Gastrocnemius medialis (tissue), 4 donors: ENCODE measurements at regions of chr19 and their contacts with region 1.

Region 1: GRCh38 chr19:10403137-10404021 is at the start of gene CDC37:
- DNase-seq: peak; percentile 91 to 96
- ATAC-seq: peak; percentile 84 to 88
- H3K4me3 ChIP-seq: peak within 1 kb of the TSS; percentile 73 to 100 (median 84)
- H3K27ac ChIP-seq: peak within 1 kb of the TSS; percentile 87 to 98 (median 90)
- H3K4me1 ChIP-seq: peaks cover 44 to 51% of the 10 kb centered on the region in 2 donors
- H3K27me3 ChIP-seq: peaks cover 13 to 23% (median 22%) of the 10 kb centered on the region in 3 donors
- CTCF ChIP-seq: no peak
- POLR2A ChIP-seq: peak; percentile 94 to 96
- total RNA-seq, gene CDC37: 133 to 189 (median 163) TPM

Region 2: DNA sequence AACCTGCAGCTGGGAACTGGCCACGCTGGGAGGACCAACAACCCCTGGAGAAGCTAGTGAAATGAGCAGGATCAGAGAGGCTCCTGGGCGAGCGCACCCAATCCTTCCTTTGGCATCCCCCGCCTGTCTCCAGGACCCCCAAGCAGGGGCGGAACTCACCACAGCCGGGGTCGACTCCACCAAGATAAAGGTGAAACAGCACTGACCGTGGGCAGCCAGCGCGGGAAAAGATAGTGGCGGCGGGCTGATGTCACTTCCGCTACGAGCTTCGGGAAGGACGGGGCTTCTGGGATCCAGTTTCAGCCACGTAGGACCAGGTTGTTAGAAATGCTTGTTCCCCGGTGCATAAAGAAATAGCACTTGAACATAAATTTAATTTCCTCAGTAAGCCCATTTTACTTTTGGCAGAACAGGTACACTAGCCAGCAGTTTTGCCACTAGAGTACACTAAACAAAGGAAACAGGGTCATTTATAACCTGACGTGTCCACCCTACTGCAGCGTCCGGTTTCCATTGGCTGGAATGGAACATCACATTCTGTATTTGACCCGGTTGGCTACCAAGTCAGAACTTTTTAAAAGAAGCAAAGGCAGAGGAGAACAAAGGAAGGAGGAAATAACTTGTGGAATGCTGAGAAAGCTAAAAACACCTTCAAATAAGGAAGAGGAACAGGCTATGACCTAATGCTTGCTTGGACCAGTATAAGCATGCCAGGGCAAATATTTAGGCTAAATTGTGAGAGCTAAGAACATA is 703.0 kb before region 1 on chr19:
- in situ Hi-C with region 1: no loop called
- intact Hi-C with region 1: no loop called
- DNase-seq: no peak
- ATAC-seq: no peak
- H3K4me3 ChIP-seq: no peak overlapping the region
- H3K27ac ChIP-seq: no peak overlapping the region
- H3K4me1 ChIP-seq: no peaks in the 10 kb centered on the region
- H3K27me3 ChIP-seq: no peaks in the 10 kb centered on the region
- CTCF ChIP-seq: no peak
- POLR2A ChIP-seq: no peak

Region 3: DNA sequence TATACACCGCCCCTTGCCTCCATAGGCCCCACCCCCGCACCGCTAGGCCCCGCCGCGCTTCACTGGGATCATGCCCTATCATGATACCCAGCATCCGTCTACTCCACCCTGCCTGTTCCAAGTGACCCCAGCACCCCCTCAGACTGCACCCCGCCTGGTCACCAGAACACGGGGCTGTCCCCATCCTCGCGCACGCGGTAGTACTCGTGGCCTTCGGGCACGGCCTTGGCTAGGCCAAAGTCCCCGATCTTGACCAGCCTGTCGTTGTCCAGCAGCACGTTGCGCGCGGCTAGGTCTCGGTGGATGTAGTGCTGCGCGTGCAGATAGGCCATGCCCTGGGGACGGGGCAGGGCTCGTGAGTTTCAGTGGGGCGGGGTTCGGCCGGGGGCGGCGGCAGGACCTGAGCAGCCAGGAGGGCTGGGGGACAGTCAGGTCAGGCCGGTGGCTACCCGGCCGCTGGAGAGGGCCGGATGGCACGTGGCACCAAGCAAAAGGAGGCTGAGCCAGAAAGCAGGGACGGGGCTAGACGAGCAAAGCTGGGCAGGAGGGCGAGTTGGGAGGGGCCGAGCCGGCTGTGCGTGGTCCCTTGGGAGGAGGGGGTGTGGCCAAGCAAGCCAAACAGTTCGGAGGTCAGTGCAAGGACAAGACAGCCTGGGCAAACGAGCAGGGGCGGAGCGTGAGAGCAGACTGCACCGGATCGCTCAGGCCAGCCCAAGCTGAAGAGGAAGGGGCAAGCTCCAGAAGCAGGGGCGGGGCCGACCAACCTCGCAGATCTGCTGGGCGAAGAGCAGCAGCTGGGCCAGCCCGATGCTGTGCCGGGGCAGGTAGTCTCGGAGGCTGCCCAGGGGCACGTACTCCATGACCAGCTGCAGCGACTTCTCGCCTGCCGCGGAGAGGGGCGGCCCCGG is 50.4 kb before region 1 on chr19:
- in situ Hi-C with region 1: no loop called
- intact Hi-C with region 1: no loop called
- DNase-seq: peak; percentile 27 to 50
- ATAC-seq: peak; percentile 54 to 71
- H3K4me3 ChIP-seq: peak overlapping the region in 2 of 4 donors; percentile 15 to 33
- H3K27ac ChIP-seq: peak overlapping the region in 3 of 4 donors; percentile 44 to 71 (median 67)
- H3K4me1 ChIP-seq: no peaks in the 10 kb centered on the region
- H3K27me3 ChIP-seq: no peaks in the 10 kb centered on the region
- CTCF ChIP-seq: no peak
- POLR2A ChIP-seq: no peak

Region 4: GRCh38 chr19:10379880-10380312 is 23.5 kb before region 1 on chr19:
- in situ Hi-C with region 1: no loop called
- intact Hi-C with region 1: no loop called
- DNase-seq: no peak
- ATAC-seq: no peak
- H3K4me3 ChIP-seq: peak overlapping the region; percentile 90 to 98 (median 95)
- H3K27ac ChIP-seq: peak overlapping the region; percentile 82 to 92 (median 82)
- H3K4me1 ChIP-seq: peaks cover 10 to 14% of the 10 kb centered on the region in 2 donors
- H3K27me3 ChIP-seq: no peaks in the 10 kb centered on the region
- CTCF ChIP-seq: no peak
- POLR2A ChIP-seq: no peak

Region 5: GRCh38 chr19:10416380-10417257 is 13.2 kb after region 1 on chr19:
- in situ Hi-C with region 1: no loop called
- intact Hi-C with region 1: loop called (anchors 2 kb)
- DNase-seq: peak; percentile 53 to 87
- ATAC-seq: peak; percentile 78 to 86
- H3K4me3 ChIP-seq: peak overlapping the region; percentile 59 to 75 (median 69)
- H3K27ac ChIP-seq: peak overlapping the region; percentile 56 to 84 (median 62)
- H3K4me1 ChIP-seq: peaks cover 27 to 42% of the 10 kb centered on the region in 2 donors
- H3K27me3 ChIP-seq: peaks cover 44 to 49% (median 48%) of the 10 kb centered on the region in 3 donors
- CTCF ChIP-seq: peak; percentile 80 to 97 (median 89)
- POLR2A ChIP-seq: no peak

Region 6: GRCh38 chr19:10478903-10479384 is 75.6 kb after region 1 on chr19:
- in situ Hi-C with region 1: no loop called
- intact Hi-C with region 1: loop called (anchors 1 kb)
- DNase-seq: peak; percentile 85 to 94
- ATAC-seq: peak; percentile 99 to 100
- H3K4me3 ChIP-seq: peak overlapping the region; percentile 53 to 70 (median 58)
- H3K27ac ChIP-seq: peak overlapping the region; percentile 46 to 63 (median 60)
- H3K4me1 ChIP-seq: peaks cover 5 to 11% of the 10 kb centered on the region in 2 donors
- H3K27me3 ChIP-seq: no peaks in the 10 kb centered on the region
- CTCF ChIP-seq: peak in 4 of 5 experiments; percentile 34 to 93 (median 64)
- POLR2A ChIP-seq: peak; percentile 48 to 51

Region 7: GRCh38 chr19:10543420-10544241 is 140.3 kb after region 1 on chr19 and contains the start of gene ATG4D:
- in situ Hi-C with region 1: no loop called
- intact Hi-C with region 1: loop called (anchors 1 kb)
- DNase-seq: peak; percentile 60 to 74
- ATAC-seq: peak; percentile 86 to 94
- H3K4me3 ChIP-seq: peak within 1 kb of the TSS; percentile 68 to 94 (median 79)
- H3K27ac ChIP-seq: peak within 1 kb of the TSS; percentile 89 to 96 (median 92)
- H3K4me1 ChIP-seq: peaks cover 15 to 18% of the 10 kb centered on the region in 2 donors
- H3K27me3 ChIP-seq: no peaks in the 10 kb centered on the region
- CTCF ChIP-seq: no peak
- POLR2A ChIP-seq: peak; percentile 70 to 85
- total RNA-seq, gene ATG4D: 67.6 to 127 (median 96.0) TPM

Region 8: DNA sequence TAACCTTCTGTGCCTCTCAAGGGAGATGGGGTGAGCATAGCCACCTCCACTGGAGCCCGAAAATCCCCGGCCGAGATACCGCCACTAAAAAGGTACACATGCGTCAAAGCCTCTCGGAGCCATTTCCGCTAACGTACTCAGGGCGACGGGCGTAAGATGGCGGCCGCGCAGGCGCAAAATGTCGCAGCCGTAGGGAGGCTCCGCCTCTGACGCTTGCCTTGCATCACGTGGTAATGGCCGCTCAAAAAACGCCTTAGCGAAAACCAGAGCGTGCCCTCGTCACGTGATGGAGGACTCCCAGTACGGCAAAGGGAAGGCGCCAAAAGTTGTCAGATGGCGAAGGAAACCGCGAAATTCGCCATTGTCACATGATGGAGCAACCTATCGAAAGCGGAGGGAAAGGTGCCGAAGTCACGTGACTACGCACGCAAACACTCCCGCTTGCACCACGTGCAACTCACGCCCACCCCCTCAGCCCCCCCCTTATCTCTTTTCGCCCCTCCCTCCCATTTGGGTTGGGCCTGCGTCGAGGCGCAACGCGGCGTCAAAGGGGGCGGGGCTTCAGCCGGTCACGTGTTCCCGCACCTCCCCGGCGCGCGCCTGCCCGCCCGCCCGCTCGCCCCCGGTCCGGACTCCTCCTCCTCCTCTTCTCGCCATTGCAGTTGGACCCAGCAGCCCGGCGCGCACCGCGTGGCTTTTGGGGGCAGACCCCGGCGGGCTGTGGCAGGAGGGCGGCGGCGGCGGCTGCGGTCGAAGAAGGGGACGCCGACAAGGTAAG is 250.5 kb after region 1 on chr19 and contains the start of gene ILF3:
- in situ Hi-C with region 1: no loop called
- intact Hi-C with region 1: loop called (anchors 10 kb)
- DNase-seq: peak; percentile 100
- ATAC-seq: peak; percentile 86 to 90
- H3K4me3 ChIP-seq: peak within 1 kb of the TSS; percentile 85 to 99 (median 97)
- H3K27ac ChIP-seq: peak within 1 kb of the TSS; percentile 99 to 100 (median 99)
- H3K4me1 ChIP-seq: peaks cover 31 to 45% of the 10 kb centered on the region in 2 donors
- H3K27me3 ChIP-seq: no peaks in the 10 kb centered on the region
- CTCF ChIP-seq: peak in 2 of 5 experiments; percentile 68 to 82
- POLR2A ChIP-seq: peak; percentile 85 to 91
- total RNA-seq, gene ILF3: 67.3 to 88.2 (median 76.6) TPM